ENCODE measurements at regions of chr12 and their contacts with region 1.

Region 1: DNA sequence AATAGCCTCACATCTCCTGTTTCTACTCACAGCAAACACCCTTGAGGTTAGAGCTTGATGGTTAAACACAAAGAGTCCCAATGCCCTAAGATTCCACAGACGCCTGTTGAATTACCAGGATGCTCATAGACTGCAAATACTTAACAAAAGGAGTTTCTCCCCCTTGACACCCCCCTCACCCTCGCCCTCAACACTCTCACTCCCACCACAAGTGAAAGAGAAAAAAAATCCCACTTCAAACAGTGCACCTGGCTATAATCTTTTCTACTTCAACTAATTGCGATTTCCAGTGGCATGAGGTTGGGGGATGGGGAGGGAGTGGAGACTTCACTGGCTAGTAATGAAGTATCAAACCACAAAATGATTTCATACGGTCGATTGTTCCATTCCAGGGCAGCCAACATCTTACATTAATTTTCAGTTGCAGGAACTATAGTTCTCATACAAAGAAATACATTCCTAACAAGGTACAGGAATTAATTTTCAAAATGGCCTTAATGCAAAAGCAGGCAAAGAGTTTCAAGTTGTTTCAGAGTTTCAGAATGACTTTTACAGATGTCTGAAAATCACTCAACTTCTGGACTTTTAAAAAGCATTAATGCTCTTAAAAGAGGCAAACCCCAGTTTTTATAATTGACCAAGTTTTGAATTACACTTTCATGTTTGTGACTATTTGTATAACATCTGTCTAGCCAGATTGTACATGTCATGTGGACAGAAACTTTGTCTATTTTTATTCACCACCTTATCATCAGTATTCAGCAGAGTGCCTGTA is 390.7 kb downstream of the C12orf75 start:
- DNase-seq: peak; percentile 38
- ATAC-seq: peak; percentile 80
- H3K4me3 ChIP-seq: no peak overlapping the region
- H3K27ac ChIP-seq: no peak overlapping the region
- H3K4me1 ChIP-seq: peaks cover 7% of the 10 kb centered on the region; the same call in 1 of the 2 replicates
- H3K27me3 ChIP-seq: peaks cover 0 to 3% of the 10 kb centered on the region in 2 experiments; a peak in 2 of 4 replicates
- CTCF ChIP-seq: no peak
- EP300 ChIP-seq: no peak
- POLR2A ChIP-seq: no peak
- RAD21 ChIP-seq: no peak

Region 2: DNA sequence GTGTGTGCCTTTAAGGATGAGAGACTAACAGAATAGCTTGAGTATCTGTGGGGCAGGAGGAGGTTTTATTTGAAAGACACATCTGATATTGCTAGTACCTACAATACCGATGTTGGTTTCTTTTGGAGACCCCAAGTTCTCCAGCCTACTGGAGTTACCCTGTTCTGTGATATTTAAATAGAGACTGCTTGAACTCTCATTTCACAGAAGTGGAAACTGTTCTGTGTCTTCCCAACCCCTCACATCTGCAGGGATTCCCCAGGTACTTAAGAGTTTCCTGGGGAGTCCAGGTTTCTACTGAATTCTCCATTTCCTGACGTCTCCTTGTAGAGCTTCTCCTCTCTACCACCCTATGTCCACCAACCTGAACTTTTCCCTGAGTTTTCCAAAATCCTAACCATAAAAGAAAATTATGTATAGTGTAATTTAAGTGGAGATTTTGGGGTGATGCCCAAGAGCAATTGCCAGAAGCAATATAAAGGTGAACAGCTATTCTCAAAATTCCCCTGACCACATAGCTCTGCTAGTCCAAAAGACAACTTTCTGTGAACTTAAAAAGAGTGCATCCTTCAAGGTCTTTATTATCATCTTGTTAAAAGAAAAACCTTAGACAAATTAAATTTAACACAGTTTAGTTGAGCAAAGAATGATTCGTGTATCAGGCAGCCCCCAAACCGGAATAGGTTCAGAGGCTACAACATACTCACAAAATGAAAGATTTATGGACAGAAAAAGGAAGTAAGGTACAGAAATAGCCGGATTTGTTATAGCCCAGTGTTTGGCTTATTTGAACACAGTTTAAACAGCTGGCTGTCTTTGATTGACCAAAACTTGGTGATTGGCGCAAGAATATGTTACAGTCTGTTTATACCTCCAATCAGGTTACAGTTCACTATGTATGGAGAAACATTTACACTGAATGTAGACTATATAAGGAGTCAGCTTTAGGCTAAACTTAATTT is 44.1 kb after region 1 on chr12:
- CTCF ChIA-PET with region 1: no interaction called
- POLR2A ChIA-PET with region 1: no interaction called
- RAD21 ChIA-PET with region 1: no interaction called
- SMC1A ChIA-PET with region 1: interaction called, 3 read pairs
- in situ Hi-C with region 1: no loop called
- intact Hi-C with region 1: loop called (anchors 1 kb)
- DNase-seq: peak; percentile 9
- ATAC-seq: peak; percentile 80
- H3K4me3 ChIP-seq: no peak overlapping the region; the same call in 1 of the 2 replicates
- H3K27ac ChIP-seq: peak overlapping the region; percentile 38
- H3K4me1 ChIP-seq: peaks cover 11% of the 10 kb centered on the region
- H3K27me3 ChIP-seq: no peaks in the 10 kb centered on the region
- CTCF ChIP-seq: no peak
- EP300 ChIP-seq: no peak
- POLR2A ChIP-seq: no peak
- RAD21 ChIP-seq: no peak